Right ventricle myocardium inferior (tissue), 1 donor: ENCODE measurements at regions of chr4 and their contacts with region 1.

Region 1: DNA sequence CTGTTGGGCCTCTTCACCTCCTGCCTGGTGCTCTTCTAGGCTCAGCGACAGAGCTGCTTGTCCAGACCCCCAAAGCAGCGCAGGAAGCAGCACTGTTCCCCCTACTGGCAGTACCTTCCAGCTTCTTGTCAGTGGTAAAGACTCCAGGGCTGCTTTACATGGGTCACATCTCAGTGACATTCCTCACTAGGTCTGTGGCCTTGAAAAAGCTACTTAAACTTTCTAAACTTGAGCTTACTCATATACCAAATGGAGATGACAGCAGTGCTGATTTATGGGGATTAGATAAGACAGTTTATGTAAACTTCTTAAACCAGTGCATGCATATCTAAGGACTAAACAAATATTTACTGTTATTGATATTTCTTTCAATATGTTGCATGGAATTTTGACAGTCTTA is 117.3 kb downstream of the FAT4 start:
- DNase-seq: no peak
- ATAC-seq: peak; percentile 69

Region 2: DNA sequence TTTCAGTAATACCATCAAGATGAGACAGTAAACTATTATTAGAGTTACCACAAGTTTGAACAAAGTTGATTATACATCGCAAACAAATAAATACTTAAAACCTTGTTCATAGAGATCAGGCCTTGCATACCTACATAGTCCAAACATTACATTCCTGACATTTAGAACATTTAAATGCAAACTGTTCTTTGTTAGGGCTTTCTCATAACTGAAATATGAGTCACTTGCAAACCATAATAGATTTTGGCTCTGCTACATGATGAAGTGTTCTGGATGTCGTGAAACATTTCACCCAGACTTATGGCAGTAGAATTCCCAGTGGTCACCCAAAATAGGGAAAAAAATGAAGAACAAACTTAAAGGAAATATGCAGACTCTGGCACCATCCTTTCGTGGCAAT is 42.4 kb before region 1 on chr4:
- intact Hi-C with region 1: loop called (anchors 5 kb)
- DNase-seq: no peak
- ATAC-seq: peak; percentile 34

Region 3: DNA sequence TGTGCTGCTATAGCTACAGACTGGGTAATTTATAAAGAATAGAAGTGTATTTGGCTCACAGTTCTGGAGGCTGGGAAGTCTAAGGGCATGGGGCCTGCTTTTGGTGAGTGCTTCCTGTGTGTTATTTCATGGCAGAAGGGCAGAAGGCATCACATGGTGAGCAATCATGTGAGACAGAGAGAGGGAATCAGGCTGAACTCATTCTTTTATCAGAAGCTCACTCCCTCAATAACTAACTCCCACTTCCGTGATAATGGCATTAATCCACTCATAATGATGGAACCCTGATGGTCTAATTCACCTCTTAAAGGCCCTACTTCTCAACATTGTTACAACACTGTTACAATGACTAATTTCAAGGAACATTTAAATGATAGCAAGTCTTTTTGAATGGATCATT is 12.1 kb after region 1 on chr4:
- intact Hi-C with region 1: no loop called
- DNase-seq: no peak
- ATAC-seq: no peak

Region 4: DNA sequence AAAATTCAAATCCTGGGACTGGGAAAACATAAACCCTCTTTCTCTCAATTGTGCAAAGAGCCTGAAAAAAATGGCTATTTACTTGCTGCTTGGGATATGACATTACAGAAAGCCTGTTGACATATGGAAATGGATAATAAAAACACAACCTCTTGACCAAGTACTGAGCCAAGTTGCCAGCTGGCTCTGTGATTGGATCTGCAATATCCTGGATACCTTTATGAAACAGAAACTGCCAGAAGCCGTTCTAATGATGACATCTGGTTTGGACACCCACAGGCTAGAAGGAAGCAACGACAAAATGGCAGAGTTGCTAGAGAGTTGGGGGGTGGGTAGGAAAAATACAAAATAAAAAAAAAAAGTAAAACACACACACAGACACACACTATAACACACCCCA is 364.0 kb after region 1 on chr4:
- intact Hi-C with region 1: no loop called
- DNase-seq: no peak
- ATAC-seq: no peak